Right ventricle myocardium inferior (tissue), 1 donor: ENCODE measurements at regions of chr2 and their contacts with region 1.

Region 1: GRCh38 chr2:58896638-58897037 is 655.5 kb upstream of the FANCL start:
- DNase-seq: no peak
- ATAC-seq: no peak

Region 2: GRCh38 chr2:58957188-58957840 is 60.7 kb after region 1 on chr2:
- intact Hi-C with region 1: loop called (anchors 10 kb)
- DNase-seq: no peak
- ATAC-seq: no peak